Naive thymus-derived CD4-positive, alpha-beta T cell (primary cell): ENCODE measurements at regions of chr12 and their contacts with region 1.

Region 1: DNA sequence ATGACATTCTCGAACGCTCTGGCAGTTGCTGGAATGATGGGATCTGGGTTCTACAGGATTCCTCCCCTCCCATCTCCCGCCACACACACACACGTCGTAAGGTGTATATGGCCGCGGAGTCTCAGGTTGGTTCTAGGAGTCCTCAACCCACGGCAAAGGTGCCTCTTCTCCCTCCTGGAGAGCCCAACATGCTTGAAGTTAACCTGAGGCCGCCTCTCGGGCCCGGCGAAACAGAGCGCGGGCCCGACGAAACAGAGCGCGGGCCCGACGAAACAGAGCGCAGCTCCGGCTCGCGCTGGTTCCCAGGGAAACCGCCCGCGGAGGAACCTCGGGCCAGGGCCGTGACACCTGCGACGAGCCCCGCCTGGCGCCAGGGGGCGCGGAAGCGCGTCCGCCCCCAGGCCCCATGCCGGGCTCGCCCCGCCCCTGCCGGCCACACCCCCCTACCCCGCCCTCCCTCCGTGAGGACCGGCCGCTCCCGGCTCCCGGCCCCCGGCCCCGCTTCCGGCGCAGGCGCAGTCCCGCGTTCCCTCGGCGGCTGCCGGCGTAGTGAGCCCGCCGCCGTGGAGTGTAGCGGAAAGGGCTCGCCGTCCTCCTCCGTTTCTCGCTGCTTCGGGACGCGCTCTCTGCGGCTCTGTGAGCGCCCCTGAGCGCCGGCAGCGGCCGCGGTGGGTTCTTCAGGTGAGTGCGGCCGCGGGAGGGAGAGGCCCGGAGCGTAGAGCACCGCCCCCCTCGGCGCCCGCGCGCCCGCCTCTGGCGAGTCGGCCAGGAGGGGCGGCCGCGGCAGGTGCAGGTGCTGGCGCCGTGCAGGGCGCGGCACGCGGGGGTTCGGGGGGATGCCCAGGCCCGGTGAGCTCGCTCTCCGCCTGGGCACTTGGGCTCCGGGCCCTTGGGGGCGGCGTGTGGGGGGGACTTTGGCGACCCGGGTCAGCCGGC is at the start of gene RAB3IP:
- DNase-seq: peak; percentile 85 to 97 (median 90)
- ATAC-seq: peak; percentile 96
- H3K4me3 ChIP-seq: peak within 1 kb of the TSS; percentile 82
- H3K4me3 Mint-ChIP-seq: peak within 1 kb of the TSS; percentile 84 to 95 (median 89)
- H3K27ac ChIP-seq: peak within 1 kb of the TSS; percentile 78
- H3K27ac Mint-ChIP-seq: peak within 1 kb of the TSS; percentile 71 to 92 (median 81)
- H3K4me1 ChIP-seq: peaks cover 0 to 8% of the 10 kb centered on the region in 2 donors
- H3K4me1 Mint-ChIP-seq: peaks cover 14 to 37% (median 30%) of the 10 kb centered on the region in 7 donors
- H3K27me3 ChIP-seq: no peaks in the 10 kb centered on the region
- H3K27me3 Mint-ChIP-seq: peaks cover 0 to 40% (median 6%) of the 10 kb centered on the region in 5 donors
- total RNA-seq, gene RAB3IP: 23.5 to 29.7 (median 23.7) TPM

Region 2: DNA sequence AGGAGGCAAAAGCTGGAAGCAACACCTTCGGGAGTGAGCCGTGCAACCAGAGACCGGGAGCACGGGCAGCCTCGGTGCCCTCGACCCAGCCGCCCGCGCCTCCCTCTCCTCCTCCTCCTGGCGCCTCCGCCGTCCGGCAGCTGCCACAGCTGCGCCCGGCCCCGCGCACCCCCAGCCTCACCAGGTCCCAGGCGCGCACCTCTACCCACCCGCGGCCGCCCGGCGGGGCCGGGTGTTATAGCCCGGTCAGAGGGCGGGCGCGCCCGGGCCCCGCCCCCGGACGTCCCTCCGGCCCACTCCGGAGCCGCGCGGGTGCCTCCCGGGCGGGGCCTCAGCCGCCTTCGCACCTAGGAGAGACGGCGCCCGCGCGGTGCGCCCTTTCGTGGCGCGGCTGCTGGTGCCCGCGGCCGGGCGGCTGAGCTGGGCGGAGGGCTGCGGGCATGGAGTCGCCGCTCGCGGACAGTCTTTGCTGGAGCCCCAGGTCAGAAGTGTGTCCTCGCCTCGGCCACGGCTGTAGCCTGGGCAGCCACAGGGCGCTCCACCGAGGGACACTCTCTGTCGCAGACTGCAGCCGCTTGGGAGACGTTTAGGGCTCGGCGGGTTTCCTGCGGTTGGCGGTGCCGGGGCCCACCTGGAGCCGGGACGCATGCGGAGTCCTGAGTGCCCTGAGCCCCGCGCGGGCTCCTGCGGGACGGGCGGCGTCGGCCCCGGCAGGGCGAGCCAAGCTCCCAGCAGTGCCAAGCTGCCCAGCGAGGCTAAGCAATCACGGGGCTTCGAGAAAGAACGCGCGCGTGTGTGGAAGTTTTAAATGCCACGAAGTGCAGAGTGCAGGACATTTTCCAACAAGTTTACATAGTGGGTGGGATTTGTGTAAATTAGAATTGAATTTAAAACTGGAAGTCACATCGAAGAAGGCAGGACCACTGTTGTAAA is 805.4 kb before region 1 on chr12 and contains the start of gene CPM:
- CTCF ChIA-PET with region 1: no interaction called
- POLR2A ChIA-PET with region 1: no interaction called
- intact Hi-C with region 1: loop called in 1 of 2 experiments (anchors 5 kb)
- DNase-seq: peak; percentile 47 to 89 (median 62)
- ATAC-seq: peak; percentile 98
- H3K4me3 ChIP-seq: peak within 1 kb of the TSS; percentile 58
- H3K4me3 Mint-ChIP-seq: peak within 1 kb of the TSS; percentile 83 to 95 (median 89)
- H3K27ac ChIP-seq: peak within 1 kb of the TSS; percentile 0
- H3K27ac Mint-ChIP-seq: peak within 1 kb of the TSS in 3 of 9 donors; percentile 51 to 55 (median 53)
- H3K4me1 ChIP-seq: peaks cover 0 to 6% of the 10 kb centered on the region in 2 donors
- H3K4me1 Mint-ChIP-seq: peaks cover 6 to 20% (median 7%) of the 10 kb centered on the region in 7 donors
- H3K27me3 ChIP-seq: peaks cover 0 to 2% of the 10 kb centered on the region in 2 donors
- H3K27me3 Mint-ChIP-seq: peaks cover 5 to 16% (median 11%) of the 10 kb centered on the region in 5 donors
- total RNA-seq, gene CPM: 1.0 to 5.9 (median 2.7) TPM

Region 3: GRCh38 chr12:69330475-69331473 is 407.8 kb before region 1 on chr12:
- CTCF ChIA-PET with region 1: no interaction called
- POLR2A ChIA-PET with region 1: interaction called, 10 read pairs
- intact Hi-C with region 1: loop called in 1 of 2 experiments (anchors 2 kb)
- DNase-seq: peak; percentile 28 to 83 (median 76)
- ATAC-seq: peak; percentile 78
- H3K4me3 ChIP-seq: peak overlapping the region; percentile 83
- H3K4me3 Mint-ChIP-seq: peak overlapping the region; percentile 75 to 97 (median 96)
- H3K27ac ChIP-seq: peak overlapping the region; percentile 92
- H3K27ac Mint-ChIP-seq: peak overlapping the region; percentile 91 to 99 (median 96)
- H3K4me1 ChIP-seq: peaks cover 20 to 51% of the 10 kb centered on the region in 2 donors
- H3K4me1 Mint-ChIP-seq: peaks cover 10 to 76% (median 71%) of the 10 kb centered on the region in 7 donors
- H3K27me3 ChIP-seq: no peaks in the 10 kb centered on the region
- H3K27me3 Mint-ChIP-seq: peaks cover 0 to 20% (median 0%) of the 10 kb centered on the region in 5 donors

Region 4: GRCh38 chr12:69585189-69586062 is 153.2 kb before region 1 on chr12 and contains the start of gene CCT2:
- CTCF ChIA-PET with region 1: no interaction called
- POLR2A ChIA-PET with region 1: no interaction called
- intact Hi-C with region 1: loop called (anchors 1 kb)
- DNase-seq: peak; percentile 88 to 96 (median 95)
- ATAC-seq: peak; percentile 97
- H3K4me3 ChIP-seq: peak within 1 kb of the TSS; percentile 100
- H3K4me3 Mint-ChIP-seq: peak within 1 kb of the TSS; percentile 84 to 97 (median 95)
- H3K27ac ChIP-seq: peak within 1 kb of the TSS; percentile 96
- H3K27ac Mint-ChIP-seq: peak within 1 kb of the TSS; percentile 91 to 98 (median 97)
- H3K4me1 ChIP-seq: peaks cover 7 to 11% of the 10 kb centered on the region in 2 donors
- H3K4me1 Mint-ChIP-seq: peaks cover 9 to 28% (median 17%) of the 10 kb centered on the region in 7 donors
- H3K27me3 ChIP-seq: no peaks in the 10 kb centered on the region
- H3K27me3 Mint-ChIP-seq: no peaks in the 10 kb centered on the region
- total RNA-seq, gene CCT2: 106 to 200 (median 157) TPM

Region 5: DNA sequence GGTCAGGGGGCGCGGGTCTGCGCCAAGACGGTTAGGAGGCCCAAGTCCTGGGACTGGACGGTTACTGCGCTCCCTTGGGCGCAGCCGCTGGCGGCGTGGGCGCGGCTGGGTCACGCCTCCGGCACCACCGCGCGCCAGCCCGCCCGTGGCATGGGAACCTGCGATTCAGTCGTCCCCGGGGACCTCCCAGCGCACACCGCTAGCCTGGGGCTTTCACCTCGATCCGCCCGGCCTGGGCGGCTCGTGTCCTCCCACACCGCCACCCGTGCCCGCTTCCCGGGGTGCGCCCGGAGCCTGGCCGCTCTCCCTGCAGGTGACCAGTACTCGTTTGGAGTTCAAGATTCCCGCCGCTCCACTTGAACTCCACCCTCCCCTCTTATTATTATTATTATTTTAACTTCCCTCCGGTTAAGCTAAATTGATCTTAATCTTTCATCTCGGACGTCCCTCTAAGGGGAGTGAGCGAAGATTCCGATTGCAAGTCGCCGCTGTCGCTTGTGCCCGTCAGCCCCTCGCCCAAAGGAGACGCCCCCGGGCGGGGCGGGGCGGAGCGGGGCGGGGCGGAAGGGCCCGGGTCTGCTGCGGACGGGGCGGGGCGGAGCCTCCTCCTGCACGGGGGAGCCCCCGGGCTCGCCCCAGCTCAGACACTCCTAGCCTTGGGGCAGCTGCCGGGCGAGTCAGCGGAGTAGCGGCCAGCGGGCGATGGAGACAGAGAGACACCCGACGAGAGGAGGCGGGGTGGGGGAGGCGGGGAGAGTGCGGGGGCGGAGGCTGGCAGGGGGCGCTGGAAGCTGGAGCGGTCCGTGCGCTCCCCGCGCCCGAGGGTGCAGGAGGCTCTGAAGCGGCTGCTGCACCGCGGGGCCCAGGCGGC is 627.3 kb after region 1 on chr12 and contains the start of gene KCNMB4:
- CTCF ChIA-PET with region 1: no interaction called
- POLR2A ChIA-PET with region 1: no interaction called
- intact Hi-C with region 1: loop called (anchors 2 to 5 kb)
- DNase-seq: peak; percentile 48 to 85 (median 68)
- ATAC-seq: peak; percentile 86
- H3K4me3 ChIP-seq: peak within 1 kb of the TSS; percentile 70
- H3K4me3 Mint-ChIP-seq: peak within 1 kb of the TSS; percentile 94 to 99 (median 97)
- H3K27ac ChIP-seq: peak within 1 kb of the TSS; percentile 71
- H3K27ac Mint-ChIP-seq: peak within 1 kb of the TSS; percentile 58 to 91 (median 89)
- H3K4me1 ChIP-seq: peaks cover 16 to 19% of the 10 kb centered on the region in 2 donors
- H3K4me1 Mint-ChIP-seq: peaks cover 12 to 41% (median 34%) of the 10 kb centered on the region in 7 donors
- H3K27me3 ChIP-seq: peaks cover 0 to 4% of the 10 kb centered on the region in 2 donors
- H3K27me3 Mint-ChIP-seq: peaks cover 0 to 54% (median 0%) of the 10 kb centered on the region in 5 donors
- total RNA-seq, gene KCNMB4: 0.31 to 1.9 (median 1.4) TPM

Region 6: GRCh38 chr12:71685914-71686665 is 1947.5 kb after region 1 on chr12 and contains the start of gene TMEM19:
- CTCF ChIA-PET with region 1: no interaction called
- POLR2A ChIA-PET with region 1: interaction called, 3 read pairs
- intact Hi-C with region 1: loop called (anchors 5 kb)
- DNase-seq: peak; percentile 78 to 88 (median 86)
- ATAC-seq: peak; percentile 90
- H3K4me3 ChIP-seq: peak within 1 kb of the TSS; percentile 96
- H3K4me3 Mint-ChIP-seq: peak within 1 kb of the TSS; percentile 85 to 99 (median 94)
- H3K27ac ChIP-seq: peak within 1 kb of the TSS; percentile 87
- H3K27ac Mint-ChIP-seq: peak within 1 kb of the TSS; percentile 85 to 97 (median 91)
- H3K4me1 ChIP-seq: peaks cover 21 to 23% of the 10 kb centered on the region in 2 donors
- H3K4me1 Mint-ChIP-seq: peaks cover 15 to 55% (median 38%) of the 10 kb centered on the region in 7 donors
- H3K27me3 ChIP-seq: no peaks in the 10 kb centered on the region
- H3K27me3 Mint-ChIP-seq: no peaks in the 10 kb centered on the region
- total RNA-seq, gene TMEM19: 13.9 to 17.7 (median 14.7) TPM